ENCODE measurements at regions of chr11 and their contacts with region 1.

Region 1: DNA sequence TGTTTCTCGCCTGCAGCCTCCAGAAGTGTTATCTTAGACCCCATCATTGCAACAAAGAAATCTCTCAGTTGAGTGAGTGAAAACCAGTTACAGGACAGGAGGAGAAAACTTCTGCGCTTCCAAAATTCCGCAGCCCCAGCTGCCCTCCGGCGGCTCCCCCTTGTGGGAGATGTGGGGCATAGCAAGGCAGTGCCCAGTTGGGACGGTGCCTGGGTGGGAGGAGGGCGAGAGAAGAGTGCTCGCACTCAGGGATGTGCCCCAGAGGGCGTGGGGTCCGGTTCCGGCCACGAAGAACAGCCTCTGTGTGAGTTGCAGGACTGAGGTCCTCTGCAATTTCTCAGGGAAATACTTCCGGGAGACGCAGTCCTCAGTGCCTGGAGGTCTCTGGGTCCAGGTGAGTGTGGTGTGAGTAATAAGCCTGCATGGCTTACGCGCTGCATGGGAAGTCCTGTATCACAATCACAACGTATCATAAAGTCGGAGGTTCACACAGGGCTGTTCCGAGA is 87.0 kb upstream of the BLID start:
- DNase-seq: peak; percentile 39
- H3K4me3 ChIP-seq: peak overlapping the region; percentile 14 to 15
- H3K27ac ChIP-seq: peak overlapping the region; percentile 40 to 41
- H3K4me1 ChIP-seq: no peaks in the 10 kb centered on the region
- H3K27me3 ChIP-seq: no peaks in the 10 kb centered on the region
- CTCF ChIP-seq: peak; percentile 90 to 95 (median 94)
- POLR2A ChIP-seq: no peak

Region 2: GRCh38 chr11:121655537-121656327 is 547.3 kb before region 1 on chr11:
- intact Hi-C with region 1: loop called (anchors 2 kb)
- DNase-seq: peak; percentile 81
- H3K4me3 ChIP-seq: peak overlapping the region; percentile 26 to 31
- H3K27ac ChIP-seq: peak overlapping the region; percentile 80 to 84
- H3K4me1 ChIP-seq: no peaks in the 10 kb centered on the region
- H3K27me3 ChIP-seq: no peaks in the 10 kb centered on the region
- CTCF ChIP-seq: peak; percentile 74 to 95 (median 83)
- POLR2A ChIP-seq: no peak

Region 3: GRCh38 chr11:122020902-122021301 is 182.1 kb before region 1 on chr11:
- intact Hi-C with region 1: loop called (anchors 10 kb)
- DNase-seq: no peak
- H3K4me3 ChIP-seq: no peak overlapping the region
- H3K27ac ChIP-seq: no peak overlapping the region
- H3K4me1 ChIP-seq: no peaks in the 10 kb centered on the region
- H3K27me3 ChIP-seq: no peaks in the 10 kb centered on the region
- CTCF ChIP-seq: peak in 2 of 4 experiments; percentile 10 to 23
- POLR2A ChIP-seq: no peak

Region 4: GRCh38 chr11:122159173-122159721 is 43.8 kb before region 1 on chr11:
- intact Hi-C with region 1: loop called (anchors 5 kb)
- DNase-seq: no peak
- H3K4me3 ChIP-seq: no peak overlapping the region
- H3K27ac ChIP-seq: peak overlapping the region; percentile 78
- H3K4me1 ChIP-seq: peaks cover 5% of the 10 kb centered on the region
- H3K27me3 ChIP-seq: no peaks in the 10 kb centered on the region
- CTCF ChIP-seq: no peak
- POLR2A ChIP-seq: no peak

Region 5: GRCh38 chr11:122717264-122717867 is 514.4 kb after region 1 on chr11:
- intact Hi-C with region 1: no loop called
- DNase-seq: no peak
- H3K4me3 ChIP-seq: no peak overlapping the region
- H3K27ac ChIP-seq: no peak overlapping the region
- H3K4me1 ChIP-seq: no peaks in the 10 kb centered on the region
- H3K27me3 ChIP-seq: no peaks in the 10 kb centered on the region
- CTCF ChIP-seq: no peak
- POLR2A ChIP-seq: no peak

Measured in prostate gland (tissue), 2 donors.